Uterus (tissue), 4 donors: ENCODE measurements at regions of chr13 and their contacts with region 1.

Region 1: DNA sequence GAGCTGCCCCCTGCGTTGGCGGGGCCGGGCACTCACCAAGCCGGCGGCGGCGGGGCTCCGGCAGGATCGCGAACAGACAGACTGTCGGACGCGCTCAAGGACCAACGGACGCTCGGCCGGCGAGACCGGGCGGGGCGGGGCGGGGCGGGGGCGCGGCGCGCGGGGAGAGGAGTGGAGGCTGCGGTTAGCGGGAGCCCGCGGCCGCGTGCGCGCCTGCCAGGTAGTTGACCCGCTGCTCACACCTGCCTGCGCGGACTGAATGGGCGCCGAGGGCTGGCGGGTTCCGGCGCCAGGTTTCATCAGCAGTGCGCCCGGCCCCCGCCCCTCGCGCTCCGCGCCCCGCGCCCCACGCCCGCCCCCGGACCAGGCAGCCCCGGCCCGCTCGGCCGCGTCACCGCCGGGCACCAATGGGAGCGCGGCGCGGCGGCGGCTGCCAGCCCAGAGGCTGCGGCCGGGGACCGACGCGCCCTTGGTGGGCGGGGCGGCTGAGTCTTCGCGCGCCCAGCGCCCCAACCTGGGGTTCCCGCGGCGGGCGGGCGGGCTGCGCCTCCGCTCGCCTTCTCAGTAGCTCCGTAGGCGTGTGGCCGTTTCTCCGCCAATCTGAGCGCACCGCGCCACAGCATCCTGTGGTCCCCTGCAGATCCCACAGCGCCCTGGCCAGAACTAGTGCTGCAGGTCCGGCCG is at the start of gene SLC7A1:
- DNase-seq: peak; percentile 67 to 77
- H3K4me3 ChIP-seq: peak within 1 kb of the TSS; percentile 60 to 98
- H3K27ac ChIP-seq: peak within 1 kb of the TSS; percentile 89 to 98
- H3K4me1 ChIP-seq: no peaks in the 10 kb centered on the region
- H3K27me3 ChIP-seq: no peaks in the 10 kb centered on the region
- CTCF ChIP-seq: peak in 2 of 4 experiments; percentile 4 to 18
- POLR2A ChIP-seq: peak in 1 of 2 donors; percentile 42
- total RNA-seq, gene SLC7A1: 4.1 to 39.0 (median 10.8) TPM

Region 2: GRCh38 chr13:29411481-29411880 is 184.0 kb before region 1 on chr13:
- intact Hi-C with region 1: no loop called
- DNase-seq: no peak
- H3K4me3 ChIP-seq: no peak overlapping the region
- H3K27ac ChIP-seq: no peak overlapping the region
- H3K4me1 ChIP-seq: no peaks in the 10 kb centered on the region
- H3K27me3 ChIP-seq: no peaks in the 10 kb centered on the region
- CTCF ChIP-seq: no peak
- POLR2A ChIP-seq: no peak

Region 3: DNA sequence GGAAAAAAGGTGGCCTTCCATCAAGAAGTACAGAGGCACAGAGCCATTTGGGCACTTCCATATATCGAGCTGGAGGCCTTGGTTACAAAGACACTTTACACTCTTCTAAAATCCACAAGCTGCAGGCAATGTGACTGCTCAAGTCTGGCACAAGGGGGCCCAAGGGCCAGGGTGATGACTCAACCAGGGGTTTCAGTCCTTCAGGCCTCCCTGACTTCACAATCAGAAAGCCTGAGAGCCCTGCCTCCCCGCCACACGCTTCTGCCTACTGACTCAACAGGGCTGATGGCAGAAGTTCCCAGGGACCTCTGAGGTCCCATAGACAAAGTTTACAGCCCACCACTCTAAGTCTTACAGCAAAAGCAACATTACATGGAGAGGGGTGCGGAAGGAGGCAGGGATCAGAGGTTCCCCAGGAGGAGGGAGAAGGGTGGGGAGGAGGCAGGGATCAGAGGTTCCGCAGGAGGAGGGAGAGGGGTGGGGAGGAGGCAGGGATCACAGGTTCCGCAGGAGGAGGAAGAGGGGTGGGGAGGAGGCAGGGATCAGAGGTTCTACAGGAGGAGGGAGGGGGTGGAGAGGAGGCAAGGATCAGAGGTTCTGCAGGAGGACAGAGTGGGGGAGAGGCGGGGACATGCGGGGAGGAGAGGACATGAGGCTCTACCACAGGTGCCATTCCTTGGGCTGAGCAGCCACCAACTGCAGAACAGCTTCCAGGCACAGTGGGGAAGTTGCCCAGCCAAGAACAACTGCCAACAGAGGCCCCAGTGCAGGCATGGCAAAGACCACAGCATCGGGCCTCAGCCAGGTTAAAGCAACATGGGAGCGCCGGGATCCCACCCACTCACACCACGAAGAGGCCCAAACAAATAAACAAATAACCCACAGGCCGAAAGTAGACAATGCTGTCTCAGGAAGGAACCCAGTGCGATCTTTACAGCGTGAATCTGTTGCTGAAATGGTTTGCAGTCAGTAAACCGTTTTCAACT is 52.0 kb before region 1 on chr13:
- intact Hi-C with region 1: no loop called
- DNase-seq: no peak
- H3K4me3 ChIP-seq: no peak overlapping the region
- H3K27ac ChIP-seq: no peak overlapping the region
- H3K4me1 ChIP-seq: no peaks in the 10 kb centered on the region
- H3K27me3 ChIP-seq: no peaks in the 10 kb centered on the region
- CTCF ChIP-seq: no peak
- POLR2A ChIP-seq: no peak

Region 4: DNA sequence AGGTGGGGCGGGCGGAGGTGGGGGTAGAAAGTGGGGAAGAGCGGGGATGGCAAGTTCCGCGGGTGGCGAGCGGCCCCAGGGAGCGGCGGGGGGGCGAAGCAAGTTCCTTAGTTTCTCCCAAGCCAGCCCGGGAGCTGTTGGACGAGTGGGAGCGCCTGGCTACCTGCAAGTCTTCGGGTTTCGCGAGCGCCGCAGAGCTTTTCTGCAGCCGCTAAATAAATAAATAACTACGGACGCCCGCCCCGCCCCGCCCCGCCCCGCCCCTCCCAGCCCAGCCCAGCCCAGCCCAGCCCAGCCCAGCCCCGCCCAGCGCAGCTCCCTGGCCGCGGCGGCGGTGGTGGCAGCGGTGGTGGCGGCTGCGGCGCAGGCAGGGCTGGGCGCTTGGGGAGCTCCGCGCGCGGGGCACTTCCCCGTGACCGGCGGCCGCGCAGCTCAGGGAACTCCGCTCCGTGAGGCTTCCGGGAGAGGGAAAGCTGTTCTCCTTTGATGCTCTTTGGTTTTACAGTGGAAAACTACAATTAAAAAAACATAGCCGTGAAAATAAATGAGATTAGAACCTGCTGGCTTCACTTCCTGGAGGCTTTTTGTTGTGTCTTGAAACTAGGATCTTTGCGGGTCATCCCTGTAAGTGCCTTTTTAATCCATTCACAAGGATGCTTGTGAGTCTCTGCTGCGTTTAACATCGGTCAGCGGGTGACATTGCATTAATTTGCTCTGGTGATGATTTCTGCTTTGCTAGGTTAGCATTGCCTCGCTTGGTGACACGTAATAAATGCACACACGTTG is 826.7 kb after region 1 on chr13 and contains the start of gene UBE2L5:
- intact Hi-C with region 1: loop called (anchors 5 kb)
- DNase-seq: peak; percentile 86 to 93
- H3K4me3 ChIP-seq: peak within 1 kb of the TSS; percentile 49 to 58
- H3K27ac ChIP-seq: peak within 1 kb of the TSS; percentile 97 to 98
- H3K4me1 ChIP-seq: peaks cover 0 to 9% of the 10 kb centered on the region in 2 donors
- H3K27me3 ChIP-seq: no peaks in the 10 kb centered on the region
- CTCF ChIP-seq: no peak
- POLR2A ChIP-seq: peak; percentile 52 to 89
- total RNA-seq, gene UBE2L5: 0.21 to 2.8 TPM in 2 of 4 donors, not detected in the others